ENCODE measurements at regions of chr10 and their contacts with region 1.

Region 1: DNA sequence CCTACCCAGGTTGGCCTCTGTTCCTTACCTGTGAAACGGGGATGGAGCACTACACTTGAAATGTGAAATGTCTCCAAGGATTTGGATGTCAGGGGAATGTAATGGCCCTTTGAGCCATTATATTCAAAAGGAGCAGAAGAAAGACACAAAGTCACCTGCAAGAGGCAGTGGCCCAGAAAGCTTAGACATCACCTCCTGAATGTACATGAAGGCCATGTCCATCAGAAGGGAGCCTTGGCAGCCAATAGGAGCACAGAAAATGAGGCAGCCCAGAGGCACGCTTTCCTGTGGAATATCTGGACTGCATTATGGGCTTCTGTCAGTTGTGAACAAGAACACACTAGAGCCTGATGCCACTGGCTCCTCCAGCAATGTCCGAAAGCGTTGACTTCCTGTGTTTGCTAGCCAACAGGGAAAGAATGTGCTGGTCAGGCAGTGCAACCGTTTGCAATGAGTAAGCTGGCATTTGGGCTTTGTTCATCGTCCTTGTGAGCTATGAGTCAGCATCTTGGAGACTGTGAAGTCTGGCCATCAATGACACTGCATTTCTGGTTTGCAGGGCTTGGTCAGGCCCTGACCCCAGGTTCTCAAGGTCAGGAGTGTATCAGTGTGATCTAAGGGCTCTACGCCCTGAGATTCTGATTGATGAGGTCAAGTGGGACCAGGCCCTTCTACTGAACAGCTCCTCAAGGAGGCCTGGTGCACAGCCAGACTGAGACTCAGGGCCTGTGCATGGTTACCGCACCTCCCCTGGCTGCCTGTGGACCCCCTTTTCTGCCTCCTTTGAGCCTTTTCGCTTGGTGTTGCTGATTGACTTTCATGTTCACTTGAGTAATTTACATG is 222.4 kb downstream of the RPS24 start:
- DNase-seq: peak; percentile 92
- H3K4me3 ChIP-seq: no peak overlapping the region
- H3K27ac ChIP-seq: peak overlapping the region; percentile 90
- H3K4me1 ChIP-seq: peaks cover 16% of the 10 kb centered on the region
- H3K27me3 ChIP-seq: no peaks in the 10 kb centered on the region
- CTCF ChIP-seq: no peak
- POLR2A ChIP-seq: no peak

Region 2: GRCh38 chr10:78335691-78336401 is 79.8 kb after region 1 on chr10:
- CTCF ChIA-PET with region 1: no interaction called
- POLR2A ChIA-PET with region 1: no interaction called
- dilution Hi-C with region 1: no loop called
- intact Hi-C with region 1: loop called (anchors 1 kb)
- DNase-seq: peak; percentile 87
- H3K4me3 ChIP-seq: no peak overlapping the region
- H3K27ac ChIP-seq: peak overlapping the region; percentile 73
- H3K4me1 ChIP-seq: peaks cover 20% of the 10 kb centered on the region
- H3K27me3 ChIP-seq: no peaks in the 10 kb centered on the region
- CTCF ChIP-seq: no peak
- POLR2A ChIP-seq: peak; percentile 71